Dorsolateral prefrontal cortex (tissue), 120 donors: ENCODE measurements at regions of chr10 and their contacts with region 1.

Region 1: DNA sequence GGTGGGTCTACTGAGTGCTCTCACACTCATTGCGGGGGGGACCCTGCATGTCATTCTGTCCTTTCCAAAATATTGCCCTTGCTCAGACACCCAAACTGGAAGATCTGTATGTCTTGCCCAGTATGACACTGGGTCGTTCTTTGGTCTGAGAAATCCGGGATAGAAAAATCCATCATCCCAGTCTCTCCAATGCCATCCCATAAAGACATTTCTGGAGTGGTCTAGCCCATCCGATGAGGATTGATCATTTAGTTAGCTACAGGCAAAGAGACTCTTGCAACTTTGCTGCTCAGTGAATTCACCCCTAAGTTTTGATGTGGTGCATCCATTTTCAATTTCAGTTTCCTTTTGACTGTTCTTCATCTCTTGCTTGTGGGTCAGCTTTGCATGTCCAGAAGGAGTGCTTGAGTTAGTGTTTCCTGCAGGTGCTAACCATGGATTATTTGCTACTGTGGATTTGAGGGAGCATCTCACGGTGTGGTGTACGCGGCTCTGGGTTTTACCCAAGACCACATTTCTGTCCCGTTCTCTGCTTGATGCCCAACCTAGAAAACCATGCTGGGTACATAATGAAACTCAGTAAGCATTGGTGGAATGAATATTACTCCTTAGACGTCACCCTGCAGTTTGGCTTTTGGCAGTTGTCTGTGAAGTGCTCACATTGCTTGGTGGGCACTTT is 247.0 kb upstream of the MKI67 start:
- DNase-seq: no peak
- H3K4me3 ChIP-seq: no peak overlapping the region
- H3K27ac ChIP-seq: no peak overlapping the region
- H3K27me3 ChIP-seq: peaks cover 0 to 57% (median 13%) of the 10 kb centered on the region in 45 donors
- CTCF ChIP-seq: no peak

Region 2: DNA sequence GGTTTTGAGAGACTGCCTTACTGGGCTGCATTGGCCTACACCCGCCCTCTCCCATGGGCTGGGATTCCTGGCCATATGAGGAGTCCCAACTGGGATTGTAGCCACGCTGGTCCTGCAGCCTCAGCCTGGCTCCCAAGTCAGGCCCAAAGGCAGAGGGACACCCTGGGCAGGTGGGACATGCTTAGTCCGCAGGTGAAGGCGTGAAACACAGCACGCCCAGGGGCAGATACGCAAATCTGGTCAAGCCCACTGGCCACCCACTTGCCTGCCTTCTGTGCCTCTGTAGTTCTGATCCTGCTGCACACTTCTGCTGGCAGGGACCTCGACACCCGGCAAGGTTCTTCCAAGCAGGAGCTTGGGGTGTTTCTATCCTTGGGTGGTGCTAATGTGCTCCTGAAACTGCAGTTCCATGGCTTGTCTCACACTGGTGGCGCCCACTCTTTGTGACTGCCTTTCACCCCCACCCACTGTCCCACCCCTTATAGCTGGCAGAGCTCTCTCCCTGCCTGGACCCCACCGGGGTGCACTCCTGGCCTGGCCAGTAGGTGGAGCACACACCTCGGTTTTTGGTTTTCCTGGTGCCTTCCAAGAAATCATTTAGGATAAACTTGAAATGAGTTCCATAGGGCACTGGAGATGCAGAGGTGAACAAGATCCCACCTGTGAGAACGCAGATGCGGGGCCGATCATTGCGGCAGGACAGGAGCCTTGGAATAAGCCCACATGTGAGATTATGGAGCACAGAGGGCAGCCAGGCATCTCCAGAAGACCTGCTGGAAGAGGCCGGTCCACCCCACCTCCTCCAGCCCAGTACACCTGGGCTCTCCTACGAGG is 294.9 kb before region 1 on chr10:
- intact Hi-C with region 1: no loop called
- DNase-seq: no peak
- H3K4me3 ChIP-seq: no peak overlapping the region
- H3K27ac ChIP-seq: no peak overlapping the region
- H3K27me3 ChIP-seq: no peaks in the 10 kb centered on the region
- CTCF ChIP-seq: peak in 55 of 56 donors; percentile 17 to 73 (median 61)

Region 3: GRCh38 chr10:128345353-128345752 is 27.9 kb before region 1 on chr10:
- intact Hi-C with region 1: loop called in 1 of 2 experiments (anchors 1 kb)
- DNase-seq: no peak
- H3K4me3 ChIP-seq: no peak overlapping the region
- H3K27ac ChIP-seq: no peak overlapping the region
- H3K27me3 ChIP-seq: peaks cover 0 to 20% (median 0%) of the 10 kb centered on the region in 45 donors
- CTCF ChIP-seq: no peak

Region 4: GRCh38 chr10:128859738-128860386 is 486.7 kb after region 1 on chr10:
- intact Hi-C with region 1: no loop called
- DNase-seq: peak in 2 of 10 donors; percentile 17 to 32
- H3K4me3 ChIP-seq: no peak overlapping the region
- H3K27ac ChIP-seq: no peak overlapping the region
- H3K27me3 ChIP-seq: no peaks in the 10 kb centered on the region
- CTCF ChIP-seq: peak; percentile 31 to 70 (median 57)